Activated CD8-positive, alpha-beta T cell treated with anti-CD3 and anti-CD28 coated beads, Interleukin-2, amount 10 ng/mL, durations not matched to agents 7 days and 5 days (primary cell): ENCODE measurements at regions of chr13 and their contacts with region 1.

Region 1: GRCh38 chr13:49976314-49977258 is 20.3 kb upstream of the TRIM13 start:
- DNase-seq: peak; percentile 81
- ATAC-seq: peak; percentile 81
- H3K4me3 Mint-ChIP-seq: no peak overlapping the region
- H3K27ac Mint-ChIP-seq: no peak overlapping the region
- H3K4me1 Mint-ChIP-seq: peaks cover 4% of the 10 kb centered on the region
- H3K27me3 Mint-ChIP-seq: no peaks in the 10 kb centered on the region

Region 2: DNA sequence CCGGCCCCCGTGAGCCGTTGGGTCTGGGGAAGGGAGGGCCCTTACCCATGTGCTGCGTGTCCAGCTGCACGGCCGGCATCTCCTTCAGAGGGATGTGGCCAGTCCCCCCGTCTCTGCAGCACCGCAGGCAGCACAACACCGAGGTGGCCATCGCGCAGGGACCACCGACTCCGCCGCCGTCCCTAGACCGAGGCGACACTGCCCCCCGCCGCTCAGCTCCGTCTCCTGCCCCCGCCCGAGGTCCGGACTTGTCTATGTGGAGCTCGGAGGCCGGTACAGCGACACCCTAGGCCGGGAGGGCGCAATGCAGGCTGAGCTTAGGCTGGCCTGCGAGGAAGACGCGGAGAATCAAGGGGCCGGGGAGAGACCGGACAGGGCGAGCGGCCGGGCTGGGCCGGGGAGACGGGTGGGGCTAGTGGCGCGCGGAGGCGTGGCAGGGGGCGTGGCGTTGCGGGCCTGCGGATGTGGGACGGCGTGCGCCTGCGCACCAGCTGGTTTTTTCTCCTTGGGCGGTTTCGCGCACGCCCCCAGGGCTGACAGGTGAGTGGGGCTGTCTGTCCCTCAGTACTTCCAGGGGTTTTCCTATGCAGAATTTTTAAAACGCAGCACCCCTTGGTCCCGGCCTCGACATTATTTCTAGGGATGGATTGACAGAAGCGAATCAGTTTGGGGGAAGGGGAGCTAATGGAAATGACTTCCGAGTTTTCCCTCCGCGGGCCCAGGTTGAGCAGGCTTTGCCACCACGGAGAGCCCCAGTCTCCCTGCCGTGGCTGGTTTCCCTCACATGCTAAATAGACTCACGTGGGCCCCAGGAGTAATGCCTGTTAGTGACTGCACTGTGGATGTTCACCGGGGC is 40.3 kb before region 1 on chr13 and contains the start of gene SPRYD7:
- CTCF ChIA-PET with region 1: interaction called, 10 read pairs
- POLR2A ChIA-PET with region 1: no interaction called
- DNase-seq: peak; percentile 96
- ATAC-seq: peak; percentile 97
- H3K4me3 Mint-ChIP-seq: peak within 1 kb of the TSS; percentile 91
- H3K27ac Mint-ChIP-seq: peak within 1 kb of the TSS; percentile 84
- H3K4me1 Mint-ChIP-seq: peaks cover 15% of the 10 kb centered on the region
- H3K27me3 Mint-ChIP-seq: peaks cover under 1% of the 10 kb centered on the region
- total RNA-seq, gene SPRYD7: 3.4 to 4.1 TPM

Region 3: DNA sequence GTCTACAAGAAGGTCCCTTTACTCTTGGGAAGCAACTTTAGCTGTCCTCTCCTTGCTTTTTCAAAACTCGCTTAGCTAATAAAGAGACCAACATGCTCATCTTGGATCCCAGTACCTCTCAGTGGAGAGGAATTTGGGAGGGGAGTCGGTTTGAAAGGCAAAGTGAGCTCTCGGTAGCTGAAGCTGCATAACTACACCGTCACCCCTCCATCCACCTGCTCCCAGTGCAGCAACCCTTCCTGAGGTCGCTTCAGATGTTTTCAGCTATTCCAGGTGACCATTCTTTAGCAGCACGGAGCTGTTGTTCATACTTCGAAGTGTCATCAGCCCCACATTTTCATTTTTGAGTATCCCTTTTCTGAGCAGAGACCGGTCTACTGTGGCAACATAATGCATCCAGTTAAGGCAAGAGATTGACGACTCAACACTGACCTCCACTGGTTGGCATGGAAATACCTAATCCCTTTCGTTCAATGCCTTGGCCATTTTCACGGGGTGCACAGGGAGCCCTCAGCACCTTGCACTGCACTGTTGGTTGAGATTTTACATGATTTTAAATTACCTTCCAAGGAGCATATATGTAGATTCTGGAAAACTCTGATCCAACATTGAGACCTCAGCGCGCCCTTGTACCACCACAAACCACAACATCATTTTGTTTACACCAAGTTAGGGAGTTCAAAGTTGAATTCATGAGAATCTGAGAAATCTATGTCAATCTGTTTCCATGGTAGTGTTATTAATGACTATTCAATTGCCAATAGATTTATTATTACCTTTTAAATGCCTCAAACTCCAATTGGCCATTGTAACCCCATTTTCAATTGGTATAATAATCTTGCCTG is 824.7 kb after region 1 on chr13:
- CTCF ChIA-PET with region 1: interaction called, 13 read pairs
- POLR2A ChIA-PET with region 1: no interaction called
- DNase-seq: peak; percentile 84
- ATAC-seq: peak; percentile 97
- H3K4me3 Mint-ChIP-seq: no peak overlapping the region
- H3K27ac Mint-ChIP-seq: peak overlapping the region; percentile 28
- H3K4me1 Mint-ChIP-seq: peaks cover 26% of the 10 kb centered on the region
- H3K27me3 Mint-ChIP-seq: no peaks in the 10 kb centered on the region